A673 (cell line): ENCODE measurements at regions of chr6 and their contacts with region 1.

Region 1: DNA sequence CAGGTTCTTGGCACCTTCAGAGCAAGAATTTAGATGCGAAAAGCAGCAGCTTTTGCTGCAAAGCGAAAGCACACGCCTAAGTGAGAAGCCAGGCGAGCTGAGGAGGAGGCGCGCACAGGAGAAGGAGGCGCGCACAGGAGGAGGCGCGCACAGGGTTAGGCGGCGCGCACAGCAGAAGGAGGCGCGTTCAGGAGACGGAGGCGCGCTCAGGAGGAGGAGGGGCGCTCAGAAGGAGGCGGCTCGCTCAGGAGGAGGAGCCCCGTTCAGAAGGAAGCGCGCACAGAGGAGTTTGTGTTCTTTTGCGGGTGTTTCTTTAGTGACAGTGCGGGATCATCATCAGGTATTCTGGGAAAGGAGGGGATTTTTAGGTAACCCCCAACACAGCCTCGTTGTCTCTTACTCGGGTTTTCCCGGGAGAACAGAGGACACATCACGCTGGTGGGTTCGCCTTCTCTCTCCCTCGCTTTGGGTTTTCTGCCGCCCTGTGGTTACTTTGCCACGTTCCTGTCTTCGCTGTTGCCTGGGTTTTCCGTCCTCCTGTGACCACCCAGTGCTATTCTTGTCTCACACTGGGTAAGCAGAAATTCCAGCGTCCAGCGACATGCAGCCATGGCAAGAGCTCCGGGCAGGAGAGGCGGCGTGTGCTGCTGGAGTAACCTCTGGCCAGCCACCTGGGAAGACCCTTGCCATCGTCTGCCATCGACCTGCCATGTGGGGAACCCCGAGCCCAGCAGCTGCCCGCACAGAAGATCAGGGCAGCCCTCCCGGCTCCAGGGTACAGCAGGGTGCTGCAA is 47.0 kb downstream of the WDR27 start:
- DNase-seq: peak; percentile 76
- H3K4me3 ChIP-seq: peak overlapping the region; percentile 46
- H3K27ac ChIP-seq: peak overlapping the region; percentile 42
- H3K4me1 ChIP-seq: no peaks in the 10 kb centered on the region
- H3K27me3 ChIP-seq: no peaks in the 10 kb centered on the region
- CTCF ChIP-seq: peak; percentile 27; the same call in 1 of the 2 replicates

Region 2: GRCh38 chr6:168895102-168895812 is 759.5 kb before region 1 on chr6:
- CTCF ChIA-PET with region 1: no interaction called
- POLR2A ChIA-PET with region 1: no interaction called
- intact Hi-C with region 1: loop called (anchors 10 kb)
- DNase-seq: peak; percentile 83
- H3K4me3 ChIP-seq: no peak overlapping the region
- H3K27ac ChIP-seq: no peak overlapping the region
- H3K4me1 ChIP-seq: no peaks in the 10 kb centered on the region
- H3K27me3 ChIP-seq: peaks cover 12% of the 10 kb centered on the region
- CTCF ChIP-seq: peak; percentile 95

Region 3: DNA sequence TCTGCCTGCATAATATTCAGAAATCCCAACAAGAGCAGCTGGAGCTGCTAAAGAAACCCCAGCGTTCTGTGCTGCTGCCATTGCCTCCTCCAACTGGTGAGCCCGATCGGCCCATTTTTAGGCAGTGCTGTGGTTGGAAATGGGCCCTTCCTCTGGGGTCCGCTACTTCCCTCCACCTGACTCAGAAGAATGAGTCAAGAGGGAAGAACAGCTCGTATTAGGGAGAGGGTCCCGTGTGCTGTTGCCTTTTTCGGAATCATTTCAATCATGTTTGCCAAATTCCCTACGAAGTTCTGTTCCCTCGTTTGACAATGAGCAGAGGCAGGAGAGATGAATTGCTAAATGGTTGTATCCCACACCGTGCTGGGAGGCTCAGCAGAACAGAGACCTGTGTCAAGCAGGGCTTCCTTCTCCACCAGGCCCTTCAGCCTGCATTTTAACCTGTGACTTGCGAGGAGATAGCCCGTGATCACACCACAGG is 439.6 kb before region 1 on chr6:
- CTCF ChIA-PET with region 1: no interaction called
- POLR2A ChIA-PET with region 1: no interaction called
- intact Hi-C with region 1: no loop called
- DNase-seq: no peak
- H3K4me3 ChIP-seq: no peak overlapping the region
- H3K27ac ChIP-seq: no peak overlapping the region
- H3K4me1 ChIP-seq: no peaks in the 10 kb centered on the region
- H3K27me3 ChIP-seq: no peaks in the 10 kb centered on the region
- CTCF ChIP-seq: no peak